Vagina (tissue), 2 donors: ENCODE measurements at regions of chr22 and their contacts with region 1.

Region 1: GRCh38 chr22:33579448-33580093 is 340.7 kb downstream of the LARGE1 start:
- DNase-seq: no peak
- H3K4me3 ChIP-seq: no peak overlapping the region
- H3K27ac ChIP-seq: no peak overlapping the region
- H3K4me1 ChIP-seq: peaks cover 17% of the 10 kb centered on the region
- H3K27me3 ChIP-seq: no peaks in the 10 kb centered on the region
- CTCF ChIP-seq: peak; percentile 66 to 74 (median 73)
- POLR2A ChIP-seq: no peak

Region 2: GRCh38 chr22:33524511-33525260 is 54.9 kb before region 1 on chr22:
- intact Hi-C with region 1: loop called (anchors 5 kb)
- DNase-seq: no peak
- H3K4me3 ChIP-seq: no peak overlapping the region
- H3K27ac ChIP-seq: no peak overlapping the region
- H3K4me1 ChIP-seq: peaks cover 8% of the 10 kb centered on the region
- H3K27me3 ChIP-seq: no peaks in the 10 kb centered on the region
- CTCF ChIP-seq: no peak
- POLR2A ChIP-seq: no peak